Prostate gland (tissue), 2 donors: ENCODE measurements at regions of chr22 and their contacts with region 1.

Region 1: GRCh38 chr22:24525416-24526037 is 29.4 kb downstream of the GUCD1 start:
- DNase-seq: peak; percentile 60
- H3K4me3 ChIP-seq: no peak overlapping the region
- H3K27ac ChIP-seq: no peak overlapping the region
- H3K4me1 ChIP-seq: no peaks in the 10 kb centered on the region
- H3K27me3 ChIP-seq: no peaks in the 10 kb centered on the region
- CTCF ChIP-seq: peak; percentile 65 to 82 (median 72)
- POLR2A ChIP-seq: no peak

Region 2: DNA sequence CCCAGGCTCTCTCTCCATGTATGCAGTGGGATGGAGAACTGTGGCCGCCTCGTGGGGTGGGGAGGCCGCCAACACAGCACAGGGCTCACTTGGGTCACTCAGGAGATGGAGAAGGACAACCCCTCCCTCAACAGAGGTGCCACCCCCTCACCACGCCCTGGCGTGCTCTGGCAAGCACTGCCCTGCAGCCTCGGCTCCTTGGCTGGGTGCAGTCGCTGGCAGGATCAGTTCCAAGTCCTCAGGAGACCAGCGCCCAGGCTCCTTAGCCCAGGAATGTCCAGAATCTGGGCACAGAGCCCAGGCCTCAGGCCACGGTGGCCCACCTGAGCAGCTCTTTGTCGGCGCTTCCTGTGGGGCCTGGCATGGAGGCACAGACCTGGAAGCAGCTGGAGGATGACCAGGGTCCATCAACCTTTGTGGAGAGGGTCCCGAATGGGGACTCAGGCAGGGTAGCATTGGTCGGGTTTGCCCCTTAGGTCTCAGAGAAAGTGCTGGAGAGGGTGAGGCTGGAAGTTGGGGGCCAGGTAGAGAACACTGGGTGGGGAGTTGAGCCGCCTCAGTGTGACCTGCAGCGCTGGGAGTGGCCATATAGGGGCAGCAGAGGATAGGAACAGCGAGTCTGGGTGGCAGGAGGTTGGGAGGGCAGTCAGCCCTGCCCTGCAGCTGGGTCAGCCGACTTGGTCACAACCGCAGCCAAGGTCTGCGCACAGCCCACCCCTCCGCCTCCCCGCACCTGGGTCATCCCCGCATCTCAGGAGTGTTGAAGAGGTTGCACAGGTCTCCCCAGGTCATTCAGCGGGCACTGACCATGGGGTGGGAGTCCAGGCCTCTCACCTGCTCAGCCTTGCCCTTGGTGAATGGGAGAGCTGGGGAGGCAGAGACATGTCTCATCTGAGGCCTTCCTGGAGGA is 336.0 kb before region 1 on chr22:
- intact Hi-C with region 1: loop called (anchors 10 kb)
- DNase-seq: peak; percentile 65
- H3K4me3 ChIP-seq: no peak overlapping the region
- H3K27ac ChIP-seq: peak overlapping the region in 1 of 2 donors; percentile 42
- H3K4me1 ChIP-seq: peaks cover 10% of the 10 kb centered on the region
- H3K27me3 ChIP-seq: no peaks in the 10 kb centered on the region
- CTCF ChIP-seq: peak; percentile 83 to 97 (median 90)
- POLR2A ChIP-seq: no peak

Region 3: DNA sequence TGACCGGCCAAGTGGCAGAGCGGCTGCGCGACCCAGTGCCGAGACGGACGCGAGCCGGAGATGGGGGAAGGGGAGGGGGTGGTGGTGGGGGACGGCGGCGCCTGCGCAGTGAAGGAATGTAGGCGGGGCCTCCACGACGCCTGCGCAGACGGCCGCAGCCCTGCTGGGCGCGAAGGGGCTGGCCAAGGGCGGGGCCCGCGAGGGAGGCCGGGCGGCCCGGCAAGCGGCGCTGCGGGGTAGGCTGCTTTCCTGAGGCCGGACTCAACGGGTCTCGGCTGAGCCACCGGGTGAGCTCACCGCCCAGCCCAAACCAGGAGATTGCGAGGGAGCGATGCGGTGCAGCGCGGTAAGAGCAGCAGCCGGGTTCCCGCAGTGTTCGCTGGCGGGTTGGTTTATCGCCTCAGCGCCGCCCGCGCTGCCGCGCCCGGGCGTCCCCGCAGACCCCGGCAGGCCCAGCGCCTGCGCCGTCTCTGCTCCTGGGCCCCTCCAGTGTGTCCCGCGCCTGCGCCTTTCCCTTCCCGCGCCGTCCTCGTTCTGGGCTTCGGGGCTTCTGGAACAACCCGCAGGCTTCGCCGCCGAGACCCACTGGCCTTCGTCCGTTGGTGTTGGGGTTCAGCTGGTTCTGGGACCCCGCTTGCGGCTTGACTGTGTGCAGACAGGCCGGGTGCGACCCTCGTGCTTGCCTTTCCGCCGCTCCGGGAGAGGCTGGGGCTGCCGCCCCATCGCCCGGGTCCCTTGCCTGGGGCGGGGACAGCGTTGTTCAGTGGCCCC is 254.7 kb before region 1 on chr22 and contains the start of gene SPECC1L:
- intact Hi-C with region 1: loop called (anchors 10 kb)
- DNase-seq: peak; percentile 88
- H3K4me3 ChIP-seq: peak within 1 kb of the TSS; percentile 64 to 94
- H3K27ac ChIP-seq: peak within 1 kb of the TSS; percentile 85 to 91
- H3K4me1 ChIP-seq: peaks cover 15% of the 10 kb centered on the region
- H3K27me3 ChIP-seq: no peaks in the 10 kb centered on the region
- CTCF ChIP-seq: peak in 3 of 4 experiments; percentile 48 to 66 (median 57)
- POLR2A ChIP-seq: peak; percentile 88
- total RNA-seq, gene SPECC1L: 39.6 to 63.2 TPM

Region 4: GRCh38 chr22:24423519-24424000 is 102.0 kb before region 1 on chr22:
- intact Hi-C with region 1: loop called (anchors 5 kb)
- DNase-seq: no peak
- H3K4me3 ChIP-seq: peak overlapping the region; percentile 39 to 49
- H3K27ac ChIP-seq: peak overlapping the region in 1 of 2 donors; percentile 19
- H3K4me1 ChIP-seq: no peaks in the 10 kb centered on the region
- H3K27me3 ChIP-seq: no peaks in the 10 kb centered on the region
- CTCF ChIP-seq: peak; percentile 81 to 89 (median 84)
- POLR2A ChIP-seq: no peak